Common myeloid progenitor, CD34-positive (primary cell): ENCODE measurements at regions of chr17 and their contacts with region 1.

Region 1: GRCh38 chr17:49952209-49952911 is 16.6 kb upstream of the DLX4 start:
- DNase-seq: peak; percentile 72 to 86 (median 83)
- H3K4me3 ChIP-seq: no peak overlapping the region
- H3K27ac ChIP-seq: no peak overlapping the region
- H3K4me1 ChIP-seq: no peaks in the 10 kb centered on the region
- H3K27me3 ChIP-seq: peaks cover 0 to 39% (median 26%) of the 10 kb centered on the region in 5 experiments

Region 2: GRCh38 chr17:49926886-49927285 is 25.5 kb before region 1 on chr17:
- CTCF ChIA-PET with region 1: interaction called, 14 read pairs
- POLR2A ChIA-PET with region 1: no interaction called
- DNase-seq: no peak
- H3K4me3 ChIP-seq: no peak overlapping the region
- H3K27ac ChIP-seq: no peak overlapping the region
- H3K4me1 ChIP-seq: peaks cover 0 to 8% (median 3%) of the 10 kb centered on the region in 4 experiments
- H3K27me3 ChIP-seq: peaks cover 0 to 27% (median 13%) of the 10 kb centered on the region in 5 experiments

Region 3: GRCh38 chr17:49939318-49939717 is 13.0 kb before region 1 on chr17:
- CTCF ChIA-PET with region 1: interaction called, 20 read pairs
- POLR2A ChIA-PET with region 1: no interaction called
- DNase-seq: peak in 2 of 3 donors; percentile 53 to 64
- H3K4me3 ChIP-seq: no peak overlapping the region
- H3K27ac ChIP-seq: no peak overlapping the region
- H3K4me1 ChIP-seq: peaks cover 0 to 6% (median 0%) of the 10 kb centered on the region in 4 experiments
- H3K27me3 ChIP-seq: peaks cover 4 to 37% (median 12%) of the 10 kb centered on the region in 5 experiments

Region 4: GRCh38 chr17:49980703-49981197 is 28.4 kb after region 1 on chr17:
- CTCF ChIA-PET with region 1: interaction called, 11 read pairs
- POLR2A ChIA-PET with region 1: no interaction called
- DNase-seq: no peak
- H3K4me3 ChIP-seq: no peak overlapping the region
- H3K27ac ChIP-seq: no peak overlapping the region
- H3K4me1 ChIP-seq: no peaks in the 10 kb centered on the region
- H3K27me3 ChIP-seq: peaks cover 0 to 38% (median 20%) of the 10 kb centered on the region in 5 experiments

Region 5: DNA sequence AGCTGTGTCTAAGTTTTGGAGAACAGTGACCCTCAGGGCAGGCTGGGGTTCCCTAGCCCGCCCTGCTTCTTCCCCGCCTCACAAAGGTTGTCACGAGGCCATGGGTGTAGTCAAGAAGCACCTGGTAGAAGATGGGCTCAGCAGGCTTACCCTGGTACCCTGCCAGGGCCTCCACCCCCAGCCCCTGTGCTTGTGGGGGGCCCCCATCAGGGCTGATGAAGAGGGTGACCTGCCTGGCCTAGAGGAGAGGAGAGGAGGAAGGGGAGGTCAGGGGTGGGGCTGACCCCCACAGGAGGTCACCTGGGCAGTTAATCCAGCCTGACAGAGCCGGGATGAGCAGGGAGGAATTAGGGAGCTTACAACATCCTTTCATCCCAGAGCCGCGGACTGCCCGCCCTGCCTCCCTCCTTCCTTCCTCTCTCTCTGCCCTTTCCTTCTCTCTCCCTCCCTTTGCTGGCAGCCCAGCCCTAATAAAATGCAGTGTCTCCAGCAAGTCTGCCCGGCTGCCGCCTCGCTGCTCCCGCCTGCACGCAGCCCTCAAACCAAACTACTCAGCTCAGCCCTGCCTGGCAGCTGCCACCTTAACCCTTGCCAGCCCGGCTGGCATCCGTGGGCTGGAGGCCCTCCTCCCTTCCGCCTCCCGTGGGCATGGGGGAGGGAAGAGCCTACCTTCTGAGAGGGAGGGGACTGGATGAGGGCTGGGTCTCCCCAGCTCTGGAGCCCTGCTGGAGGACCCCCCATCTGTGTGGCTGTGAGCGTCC is 35.5 kb after region 1 on chr17:
- CTCF ChIA-PET with region 1: interaction called, 91 read pairs
- POLR2A ChIA-PET with region 1: no interaction called
- DNase-seq: peak in 1 of 3 donors; percentile 52
- H3K4me3 ChIP-seq: no peak overlapping the region
- H3K27ac ChIP-seq: no peak overlapping the region
- H3K4me1 ChIP-seq: peaks cover 0 to 21% (median 13%) of the 10 kb centered on the region in 4 experiments
- H3K27me3 ChIP-seq: peaks cover 0 to 79% (median 28%) of the 10 kb centered on the region in 5 experiments